PC-9 (cell line): ENCODE measurements at regions of chr5 and their contacts with region 1.

Region 1: DNA sequence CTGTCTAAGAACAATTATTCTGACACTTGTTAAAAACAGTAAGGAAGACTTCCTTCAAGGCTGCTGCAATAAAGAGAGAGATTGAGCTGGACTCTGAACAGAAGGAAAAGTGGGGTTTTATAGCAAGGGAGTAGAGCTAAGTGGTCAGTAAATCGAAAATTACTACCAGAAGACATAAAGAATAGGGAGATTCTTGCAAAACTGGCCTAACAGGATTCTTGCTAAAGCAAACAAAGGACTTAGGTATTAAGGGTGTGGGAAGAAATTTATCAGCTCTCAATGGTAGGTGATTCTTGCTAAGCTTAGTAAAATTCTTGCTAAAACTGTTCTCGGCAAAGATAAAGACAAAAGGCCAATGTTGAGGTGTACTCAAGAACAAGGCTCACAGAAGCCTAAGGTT is 300.5 kb downstream of the SLCO4C1 start:
- DNase-seq: peak; percentile 9 to 78
- H3K4me3 ChIP-seq: no peak overlapping the region
- H3K27ac ChIP-seq: peak overlapping the region; percentile 45
- H3K4me1 ChIP-seq: peaks cover 17% of the 10 kb centered on the region
- H3K27me3 ChIP-seq: no peaks in the 10 kb centered on the region
- CTCF ChIP-seq: no peak

Region 2: DNA sequence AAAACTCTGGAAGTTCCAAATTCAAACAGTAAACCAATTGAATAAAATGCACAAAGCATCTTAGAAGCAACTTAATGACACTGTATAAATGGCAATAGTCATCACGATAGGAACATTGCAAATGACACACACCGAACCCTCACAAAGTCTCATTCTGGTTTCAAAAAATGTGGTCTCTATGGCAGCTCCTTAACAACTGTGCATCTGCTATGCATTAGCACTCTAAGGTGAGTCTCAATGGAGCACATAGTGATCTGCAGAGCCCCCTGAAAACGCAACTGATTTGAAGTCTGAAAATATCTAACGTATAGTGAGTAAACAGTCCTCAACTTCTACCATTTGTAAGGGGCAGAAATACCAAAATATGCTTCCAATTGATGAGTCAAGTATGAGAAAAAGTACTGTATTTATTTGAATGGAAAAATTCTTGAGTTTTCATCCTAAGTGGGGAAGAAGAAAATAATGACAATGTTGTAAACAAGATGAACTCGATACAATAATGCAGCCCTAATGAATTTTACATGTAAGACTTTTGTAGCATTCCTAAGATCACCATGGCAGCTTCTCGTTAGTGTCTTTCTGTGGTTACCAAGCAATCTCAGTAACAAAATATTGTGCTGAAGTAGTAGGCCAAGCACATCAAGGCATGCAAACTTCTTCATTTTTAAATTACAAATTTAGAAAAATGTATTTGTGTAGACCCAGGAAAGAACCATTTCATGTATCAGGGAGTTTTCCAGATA is 1977.9 kb before region 1 on chr5:
- CTCF ChIA-PET with region 1: no interaction called
- POLR2A ChIA-PET with region 1: no interaction called
- intact Hi-C with region 1: loop called (anchors 5 kb)
- DNase-seq: no peak
- H3K4me3 ChIP-seq: no peak overlapping the region
- H3K27ac ChIP-seq: no peak overlapping the region
- H3K4me1 ChIP-seq: no peaks in the 10 kb centered on the region
- H3K27me3 ChIP-seq: no peaks in the 10 kb centered on the region
- CTCF ChIP-seq: no peak